Heart left ventricle (tissue), 16 donors: ENCODE measurements at regions of chr7 and their contacts with region 1.

Region 1: DNA sequence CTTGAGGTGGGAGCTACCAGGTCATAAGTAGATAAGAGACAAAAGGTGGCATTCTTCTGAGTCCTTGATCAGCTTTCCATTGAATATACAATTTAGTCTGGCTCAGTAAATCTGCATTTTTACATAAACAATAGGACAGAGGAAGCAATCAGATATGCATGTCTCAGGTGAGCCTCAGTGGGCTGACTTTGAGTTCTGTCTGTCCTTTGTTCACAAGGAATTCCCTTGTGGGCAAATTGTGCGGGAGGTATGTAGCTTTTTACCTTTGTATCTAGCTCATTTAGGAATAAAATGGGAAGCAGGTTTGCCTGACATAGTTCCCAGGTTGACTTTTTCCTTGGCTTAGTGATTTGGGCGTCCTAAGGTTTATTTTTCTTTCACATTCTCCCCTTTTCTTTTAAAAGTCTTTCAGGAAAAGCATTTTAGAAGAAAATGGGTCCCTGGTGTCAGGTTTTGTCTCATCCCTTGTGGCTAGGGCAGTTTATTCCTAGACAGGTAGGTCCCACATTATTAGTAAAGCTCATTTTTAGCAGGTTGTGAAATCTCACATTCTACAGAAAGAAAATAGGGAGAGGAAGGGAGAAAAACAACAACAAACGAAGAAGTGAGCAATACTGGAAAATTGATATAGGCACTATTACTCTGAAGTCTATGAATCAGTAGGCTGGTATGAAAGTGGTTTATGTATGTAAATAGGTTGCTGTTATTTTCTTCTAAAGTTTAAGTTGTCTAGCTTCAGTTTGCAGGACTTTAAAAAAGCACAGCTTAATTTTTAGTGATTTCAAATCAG is 16.5 kb downstream of the SPAM1 start:
- DNase-seq: no peak
- ATAC-seq: no peak
- H3K4me3 ChIP-seq: no peak overlapping the region
- H3K27ac ChIP-seq: no peak overlapping the region
- H3K4me1 ChIP-seq: no peaks in the 10 kb centered on the region
- H3K27me3 ChIP-seq: no peaks in the 10 kb centered on the region
- CTCF ChIP-seq: no peak
- POLR2A ChIP-seq: no peak

Region 2: GRCh38 chr7:123879628-123880027 is 62.0 kb before region 1 on chr7:
- intact Hi-C with region 1: loop called in 1 of 10 experiments (anchors 10 kb)
- DNase-seq: no peak
- ATAC-seq: peak in 3 of 4 donors; percentile 24 to 59 (median 41)
- H3K4me3 ChIP-seq: no peak overlapping the region
- H3K27ac ChIP-seq: peak overlapping the region in 3 of 12 donors; percentile 2 to 31 (median 26)
- H3K4me1 ChIP-seq: peaks cover 0 to 8% (median 0%) of the 10 kb centered on the region in 12 donors
- H3K27me3 ChIP-seq: no peaks in the 10 kb centered on the region
- CTCF ChIP-seq: no peak
- POLR2A ChIP-seq: no peak